ENCODE measurements at regions of chr16 and their contacts with region 1.

Region 1: DNA sequence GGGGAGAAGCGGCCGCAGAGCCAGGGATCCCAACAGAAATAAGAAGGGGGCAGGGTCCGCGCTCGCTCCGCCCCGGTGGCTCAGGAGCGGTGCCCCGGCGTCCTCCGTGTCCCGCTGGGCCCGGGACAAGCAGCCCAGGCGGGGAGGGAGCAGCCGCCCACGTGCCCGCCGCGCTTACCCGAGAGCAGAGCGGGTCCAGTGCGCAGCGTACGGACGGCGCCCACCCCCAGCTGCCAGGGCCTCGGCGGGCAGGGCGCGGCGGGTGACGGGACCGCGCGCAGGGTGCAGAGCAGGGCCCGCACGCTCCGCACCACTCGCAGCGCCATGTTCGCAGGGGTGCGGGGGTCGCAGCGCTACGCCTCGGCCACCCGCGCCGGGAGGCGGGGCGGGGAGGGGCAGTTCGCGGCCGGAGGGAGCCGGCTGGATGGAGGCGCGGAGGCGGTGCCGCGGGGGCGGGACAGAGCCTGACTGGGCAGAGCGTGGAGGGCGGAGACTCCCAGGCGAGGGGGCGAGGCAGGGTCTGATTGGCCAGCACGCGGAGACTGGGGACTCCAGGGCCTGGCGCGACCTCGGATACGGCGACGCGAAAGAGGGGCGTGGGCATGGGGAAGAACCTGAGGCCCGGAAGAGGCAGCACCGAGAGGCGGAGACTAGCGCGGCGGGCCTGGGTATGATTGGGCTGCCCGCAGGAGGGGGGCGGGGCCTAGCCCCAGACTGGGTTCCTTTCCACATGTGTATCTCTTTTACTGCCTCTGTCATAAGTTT is at the start of gene GCSH:
- DNase-seq: peak; percentile 100
- total RNA-seq, gene GCSH: 35.2 TPM

Region 2: DNA sequence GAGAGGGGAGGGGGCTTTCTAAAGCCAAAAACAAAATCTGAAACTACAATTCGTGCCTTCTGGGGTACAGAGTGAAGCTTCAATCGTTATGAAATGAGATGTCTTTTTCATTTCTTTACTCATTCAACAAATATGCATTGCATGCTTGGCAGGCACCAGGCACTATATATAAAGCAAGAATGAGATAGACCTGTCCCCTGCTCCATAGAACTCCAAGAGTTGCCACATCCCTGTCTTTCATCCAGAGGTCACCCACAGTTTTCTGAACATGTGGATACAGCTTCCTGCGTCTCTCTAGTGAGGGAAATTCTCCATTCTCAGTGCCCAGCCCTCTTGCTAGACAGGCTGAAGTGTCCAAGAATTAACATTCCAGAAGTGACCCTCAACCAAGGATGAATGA is 1152.4 kb before region 1 on chr16:
- intact Hi-C with region 1: no loop called
- DNase-seq: no peak

Region 3: DNA sequence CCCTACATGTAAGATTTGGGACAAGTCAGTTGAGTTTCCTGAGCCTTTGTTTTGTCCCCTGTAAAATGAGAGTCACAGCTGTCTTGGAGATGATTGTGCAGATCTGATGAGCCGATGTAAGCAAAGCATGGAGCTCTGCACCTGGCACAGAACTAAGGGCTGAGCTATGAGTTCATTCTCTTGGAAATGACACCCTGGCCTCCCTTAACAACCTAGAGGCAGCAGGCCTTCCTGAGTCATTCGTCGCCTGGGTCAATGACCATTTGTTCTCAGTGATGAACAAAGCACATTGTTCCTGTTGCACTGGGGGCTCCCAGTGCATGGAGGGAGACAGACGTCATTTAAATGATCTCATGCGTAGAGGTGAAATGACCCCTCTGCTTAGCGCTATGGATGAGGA is 62.8 kb after region 1 on chr16:
- intact Hi-C with region 1: no loop called
- DNase-seq: no peak

Region 4: GRCh38 chr16:81181013-81181720 is 85.0 kb after region 1 on chr16:
- intact Hi-C with region 1: loop called (anchors 10 kb)
- DNase-seq: peak; percentile 84

Region 5: GRCh38 chr16:81314603-81315270 is 218.6 kb after region 1 on chr16 and contains the start of gene GAN:
- intact Hi-C with region 1: loop called (anchors 10 kb)
- DNase-seq: peak; percentile 98
- total RNA-seq, gene GAN: 13.3 TPM

Measured in cardiac septum (tissue), 1 donor.